GM12878 (cell line): ENCODE measurements at regions of chr4 and their contacts with region 1.

Region 1: GRCh38 chr4:89894649-89895550 is at the start of gene MMRN1:
- DNase-seq: no peak
- ATAC-seq: peak; percentile 72
- H3K4me3 ChIP-seq: peak within 1 kb of the TSS; percentile 45; the same call in 1 of the 2 replicates
- H3K27ac ChIP-seq: no peak within 1 kb of the TSS
- H3K4me1 ChIP-seq: no peaks in the 10 kb centered on the region
- H3K27me3 ChIP-seq: no peaks in the 10 kb centered on the region
- CTCF ChIP-seq: no peak; a peak in 1 of 6 replicates
- EP300 ChIP-seq: no peak
- POLR2A ChIP-seq: no peak
- RAD21 ChIP-seq: no peak
- polyA plus RNA-seq, gene MMRN1: 0.53 to 0.55 TPM

Region 2: DNA sequence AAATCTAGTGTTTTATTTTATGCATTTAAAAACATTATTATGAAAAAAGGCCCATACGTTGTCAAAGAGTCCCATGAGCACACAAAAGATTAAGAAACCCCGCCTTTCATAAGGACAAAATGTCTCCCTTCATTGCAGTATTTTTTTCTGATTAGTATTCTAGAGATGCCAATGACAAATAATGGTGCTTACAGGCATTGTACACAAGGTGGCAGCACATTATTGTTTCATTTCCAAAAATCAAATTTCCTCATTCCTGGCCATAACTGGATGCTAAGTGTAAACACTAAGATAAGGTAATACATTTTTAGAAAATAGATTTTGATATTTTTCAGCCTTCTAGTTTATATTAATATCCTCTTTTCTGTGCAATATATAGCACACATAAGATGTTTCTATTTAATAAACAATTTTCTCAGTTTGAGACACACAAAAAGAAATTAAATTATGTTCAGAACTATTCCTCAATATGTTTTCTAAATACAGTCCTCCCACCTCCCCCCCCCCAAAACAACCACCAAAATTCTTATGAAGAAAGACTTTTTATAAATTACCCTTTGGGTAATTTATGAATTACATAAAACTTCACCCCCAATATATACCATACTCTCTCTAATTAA is 735.9 kb before region 1 on chr4:
- CTCF ChIA-PET with region 1: no interaction called
- POLR2A ChIA-PET with region 1: no interaction called
- RAD21 ChIA-PET with region 1: no interaction called
- SMC1A ChIA-PET with region 1: no interaction called
- in situ Hi-C with region 1: no loop called
- intact Hi-C with region 1: loop called (anchors 2 kb)
- DNase-seq: no peak
- ATAC-seq: peak; percentile 81
- H3K4me3 ChIP-seq: no peak overlapping the region
- H3K27ac ChIP-seq: no peak overlapping the region
- H3K4me1 ChIP-seq: no peaks in the 10 kb centered on the region
- H3K27me3 ChIP-seq: no peaks in the 10 kb centered on the region; a peak in 1 of 4 replicates
- CTCF ChIP-seq: peak; percentile 62 to 71 (median 70); a peak in 5 of 6 replicates
- EP300 ChIP-seq: no peak
- POLR2A ChIP-seq: no peak
- RAD21 ChIP-seq: peak; percentile 59

Region 3: DNA sequence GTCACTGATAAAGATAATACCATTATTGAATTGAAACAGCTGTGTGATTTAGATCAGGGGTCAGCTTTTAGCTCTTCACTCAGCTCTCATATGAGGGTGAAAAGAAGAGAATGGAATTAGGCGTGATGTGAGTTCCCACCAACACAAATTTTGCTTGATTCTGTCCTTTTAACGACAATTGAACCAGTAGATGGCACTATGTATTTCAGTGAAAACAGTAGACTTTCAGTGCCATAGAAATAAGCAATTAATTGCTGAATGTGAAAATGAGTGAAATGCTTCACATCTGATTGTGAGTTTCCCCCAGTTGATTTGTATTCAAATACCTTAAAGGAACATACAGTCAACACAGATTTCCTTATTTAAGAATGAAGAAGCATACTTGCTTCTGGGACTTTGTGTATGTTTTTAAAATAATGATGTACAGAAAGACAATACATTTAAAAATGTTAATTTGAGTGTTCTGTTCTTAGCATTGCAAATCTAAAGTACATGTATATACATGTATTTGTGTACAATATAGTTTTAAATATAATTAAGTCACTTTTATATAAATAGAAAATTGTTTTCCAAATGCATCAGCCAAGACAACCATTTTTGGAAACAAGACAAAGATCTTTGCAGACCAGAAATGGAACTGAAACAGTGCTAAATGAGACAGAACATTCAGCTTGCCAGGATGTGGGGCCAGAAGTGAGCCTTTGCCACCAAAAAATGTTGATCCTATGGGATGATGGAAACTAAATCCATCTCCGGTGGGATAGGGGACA is 236.8 kb before region 1 on chr4:
- CTCF ChIA-PET with region 1: interaction called, 14 read pairs
- POLR2A ChIA-PET with region 1: no interaction called
- RAD21 ChIA-PET with region 1: interaction called, 3 read pairs
- SMC1A ChIA-PET with region 1: interaction called, 4 read pairs
- in situ Hi-C with region 1: no loop called
- intact Hi-C with region 1: no loop called
- DNase-seq: no peak
- ATAC-seq: peak; percentile 78
- H3K4me3 ChIP-seq: no peak overlapping the region
- H3K27ac ChIP-seq: no peak overlapping the region; the same call in 1 of the 2 replicates
- H3K4me1 ChIP-seq: peaks cover 4% of the 10 kb centered on the region; the same call in 1 of the 2 replicates
- H3K27me3 ChIP-seq: no peaks in the 10 kb centered on the region
- CTCF ChIP-seq: peak; percentile 14 to 40 (median 38); a peak in 5 of 6 replicates
- EP300 ChIP-seq: no peak
- POLR2A ChIP-seq: no peak
- RAD21 ChIP-seq: peak; percentile 36; the same call in 1 of the 2 replicates

Region 4: DNA sequence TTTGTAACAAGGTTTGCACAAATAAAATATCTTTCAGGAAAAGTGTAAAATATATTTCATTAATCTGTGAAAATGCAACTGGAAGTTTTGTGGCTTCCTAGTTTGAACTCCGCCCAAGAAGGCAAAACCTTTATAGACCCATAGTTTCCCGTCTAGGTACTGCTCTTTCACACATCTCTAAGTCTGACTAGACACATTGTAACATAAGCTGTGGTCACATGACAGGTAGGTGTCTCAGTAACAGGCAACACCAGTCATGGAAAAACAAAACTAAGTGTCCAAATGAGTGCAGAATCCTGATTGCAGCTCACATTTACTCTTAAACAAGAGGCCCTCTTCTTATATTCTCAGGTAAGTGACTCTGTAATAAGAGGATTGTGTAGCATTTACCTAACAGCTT is 113.6 kb before region 1 on chr4:
- CTCF ChIA-PET with region 1: no interaction called
- POLR2A ChIA-PET with region 1: no interaction called
- RAD21 ChIA-PET with region 1: no interaction called
- SMC1A ChIA-PET with region 1: no interaction called
- in situ Hi-C with region 1: no loop called
- intact Hi-C with region 1: no loop called
- DNase-seq: no peak
- ATAC-seq: no peak
- H3K4me3 ChIP-seq: no peak overlapping the region
- H3K27ac ChIP-seq: no peak overlapping the region
- H3K4me1 ChIP-seq: no peaks in the 10 kb centered on the region
- H3K27me3 ChIP-seq: no peaks in the 10 kb centered on the region
- CTCF ChIP-seq: no peak
- EP300 ChIP-seq: no peak
- POLR2A ChIP-seq: no peak
- RAD21 ChIP-seq: no peak

Region 5: GRCh38 chr4:89836897-89837384 is 58.0 kb before region 1 on chr4 and contains the start of gene SNCA:
- CTCF ChIA-PET with region 1: interaction called, 3 read pairs
- POLR2A ChIA-PET with region 1: no interaction called
- RAD21 ChIA-PET with region 1: no interaction called
- SMC1A ChIA-PET with region 1: no interaction called
- in situ Hi-C with region 1: no loop called
- intact Hi-C with region 1: loop called (anchors 5 kb)
- DNase-seq: no peak
- ATAC-seq: no peak; the same call in 2 of the 3 replicates
- H3K4me3 ChIP-seq: no peak within 1 kb of the TSS
- H3K27ac ChIP-seq: no peak within 1 kb of the TSS
- H3K4me1 ChIP-seq: no peaks in the 10 kb centered on the region
- H3K27me3 ChIP-seq: peaks cover 3 to 12% of the 10 kb centered on the region in 2 experiments; a peak in 3 of 4 replicates
- CTCF ChIP-seq: no peak
- EP300 ChIP-seq: no peak
- POLR2A ChIP-seq: no peak
- RAD21 ChIP-seq: no peak
- polyA plus RNA-seq, gene SNCA: not detected

Region 6: DNA sequence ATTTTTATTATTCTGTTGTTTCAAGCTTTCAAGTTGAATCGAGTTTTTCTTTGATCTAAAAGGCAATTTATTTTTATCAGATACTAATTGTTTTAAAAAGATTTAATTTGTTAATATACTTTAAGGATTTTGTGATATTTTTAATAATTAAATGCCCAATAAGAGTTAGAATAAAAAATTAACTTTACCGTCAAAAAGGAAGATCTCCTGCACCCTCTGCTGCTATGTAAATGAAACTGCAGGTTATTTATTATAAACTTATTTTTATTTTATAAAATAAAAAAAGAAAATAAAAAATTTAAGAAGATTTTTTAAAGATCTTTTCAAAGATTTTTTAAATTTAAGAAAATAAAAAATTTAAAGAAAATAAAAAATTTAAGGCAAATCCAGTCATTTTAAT is 398.4 kb after region 1 on chr4:
- CTCF ChIA-PET with region 1: no interaction called
- POLR2A ChIA-PET with region 1: no interaction called
- RAD21 ChIA-PET with region 1: no interaction called
- SMC1A ChIA-PET with region 1: no interaction called
- in situ Hi-C with region 1: no loop called
- intact Hi-C with region 1: no loop called
- DNase-seq: no peak
- ATAC-seq: no peak
- H3K4me3 ChIP-seq: no peak overlapping the region
- H3K27ac ChIP-seq: no peak overlapping the region
- H3K4me1 ChIP-seq: no peaks in the 10 kb centered on the region
- H3K27me3 ChIP-seq: no peaks in the 10 kb centered on the region
- CTCF ChIP-seq: peak in 2 of 3 experiments; percentile 18 to 22; a peak in 2 of 6 replicates
- EP300 ChIP-seq: no peak
- POLR2A ChIP-seq: no peak
- RAD21 ChIP-seq: peak; percentile 72